ENCODE measurements at regions of chrX and their contacts with region 1.

Region 1: DNA sequence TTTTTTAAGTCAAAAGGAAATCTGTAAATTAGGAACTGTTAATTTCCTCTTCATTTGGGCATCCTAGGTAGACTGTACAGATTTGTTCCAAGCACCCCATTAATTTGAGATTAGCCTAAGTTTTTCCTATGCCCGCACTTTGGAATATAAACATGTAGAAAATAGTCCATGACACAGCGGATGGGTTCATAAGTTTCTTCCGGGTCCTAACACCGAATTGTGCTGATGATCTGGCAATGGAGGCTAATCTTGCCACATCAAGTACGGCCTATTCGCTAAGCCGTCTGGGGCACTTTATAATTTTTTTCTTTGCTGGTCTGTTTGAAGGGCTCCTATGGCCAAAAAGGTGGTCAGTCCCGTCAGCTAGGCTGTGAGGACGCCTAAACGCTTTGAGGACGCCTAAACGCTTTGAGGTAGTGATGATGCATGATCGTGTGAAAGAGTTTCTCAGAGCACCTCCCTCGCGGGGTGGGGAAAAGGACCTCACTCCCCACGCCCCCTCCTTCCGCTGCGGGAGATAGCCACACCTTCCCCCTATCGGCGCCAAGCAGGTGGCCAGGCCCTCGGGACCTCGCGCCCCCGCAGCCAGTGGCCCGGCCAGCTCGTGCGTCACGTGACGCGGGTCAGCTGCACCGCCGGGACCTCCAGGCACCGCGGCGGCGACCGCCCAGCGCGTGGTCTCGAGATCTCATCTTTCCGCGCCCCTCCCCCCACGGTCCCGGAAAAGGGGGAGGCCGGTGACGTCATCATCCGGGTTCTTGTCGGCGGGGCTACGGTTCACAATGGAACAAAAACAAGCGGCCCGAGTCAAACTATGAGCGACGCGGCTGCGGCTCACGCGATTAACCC is 977 bp upstream of the USP9X start:
- DNase-seq: peak; percentile 94
- ATAC-seq: peak; percentile 64
- H3K4me3 Mint-ChIP-seq: peak overlapping the region; percentile 90
- H3K27ac Mint-ChIP-seq: peak overlapping the region; percentile 99
- H3K4me1 Mint-ChIP-seq: peaks cover 36% of the 10 kb centered on the region
- H3K27me3 Mint-ChIP-seq: no peaks in the 10 kb centered on the region
- CTCF ChIP-seq: no peak

Region 2: DNA sequence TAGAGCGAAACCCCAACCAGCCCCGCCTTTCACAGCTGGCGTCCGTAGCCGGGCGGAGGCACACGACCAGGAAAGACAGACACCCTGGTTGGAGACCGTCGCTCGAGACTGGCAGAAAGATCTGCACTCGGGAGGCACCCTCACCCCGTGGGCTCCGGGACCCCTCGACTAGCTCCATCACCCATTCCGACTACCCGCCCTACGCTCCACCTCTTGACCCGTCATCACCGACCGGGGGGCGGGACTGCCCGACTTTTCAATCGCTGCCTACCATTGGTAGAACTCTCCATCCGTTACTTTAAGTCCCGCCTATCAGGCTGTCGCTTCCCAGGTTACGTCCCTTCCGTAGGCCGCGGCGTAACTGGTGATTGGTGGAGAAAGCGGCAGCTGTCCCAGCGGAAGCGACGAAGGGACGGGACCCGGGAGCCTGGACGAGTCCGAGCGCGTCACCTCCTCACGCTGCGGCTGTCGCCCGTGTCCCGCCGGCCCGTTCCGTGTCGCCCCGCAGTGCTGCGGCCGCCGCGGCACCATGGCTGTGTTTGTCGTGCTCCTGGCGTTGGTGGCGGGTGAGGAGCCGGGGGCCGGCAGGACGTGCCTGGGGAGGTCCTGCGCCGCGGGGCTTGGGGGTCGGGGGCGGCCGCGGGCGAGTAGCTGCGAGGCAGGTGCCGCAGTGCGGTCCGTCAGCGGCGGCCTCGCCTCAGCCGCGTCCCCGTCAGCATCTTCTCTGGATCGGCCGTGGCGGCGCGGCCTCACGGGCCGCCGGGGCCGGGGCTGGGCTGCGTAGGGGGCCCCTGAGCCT is 503.5 kb before region 1 on chrX and contains the start of gene ATP6AP2:
- CTCF ChIA-PET with region 1: no interaction called
- POLR2A ChIA-PET with region 1: no interaction called
- intact Hi-C with region 1: loop called (anchors 10 kb)
- DNase-seq: peak; percentile 71
- ATAC-seq: peak; percentile 95
- H3K4me3 Mint-ChIP-seq: peak within 1 kb of the TSS; percentile 92
- H3K27ac Mint-ChIP-seq: peak within 1 kb of the TSS; percentile 94
- H3K4me1 Mint-ChIP-seq: peaks cover 27% of the 10 kb centered on the region
- H3K27me3 Mint-ChIP-seq: no peaks in the 10 kb centered on the region
- CTCF ChIP-seq: no peak
- total RNA-seq, gene ATP6AP2: 48.6 and 53.8 TPM in 2 replicates

Region 3: DNA sequence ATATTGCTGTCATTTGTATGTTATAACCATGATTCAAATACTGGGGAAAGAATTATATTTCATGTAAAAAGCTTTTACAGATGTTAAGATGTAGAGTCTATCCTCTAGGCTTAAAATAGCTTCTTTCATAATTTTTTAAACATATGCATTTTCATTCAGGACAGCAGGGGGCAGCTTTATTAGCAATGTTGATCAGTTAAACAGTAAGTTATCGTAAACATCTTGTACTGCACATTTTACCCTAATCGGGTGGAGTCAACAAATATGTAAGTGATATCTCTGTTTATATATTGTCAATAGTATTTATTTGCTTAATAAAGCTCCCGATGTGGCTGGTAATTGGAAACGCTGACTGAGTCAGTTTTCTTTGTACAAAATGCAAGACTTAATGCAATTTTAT is 206.4 kb before region 1 on chrX:
- CTCF ChIA-PET with region 1: interaction called, 11 read pairs
- POLR2A ChIA-PET with region 1: interaction called, 11 read pairs
- intact Hi-C with region 1: loop called (anchors 10 kb)
- DNase-seq: no peak
- ATAC-seq: peak; percentile 40
- H3K4me3 Mint-ChIP-seq: no peak overlapping the region
- H3K27ac Mint-ChIP-seq: no peak overlapping the region
- H3K4me1 Mint-ChIP-seq: no peaks in the 10 kb centered on the region
- H3K27me3 Mint-ChIP-seq: peaks cover 6% of the 10 kb centered on the region
- CTCF ChIP-seq: no peak

Region 4: DNA sequence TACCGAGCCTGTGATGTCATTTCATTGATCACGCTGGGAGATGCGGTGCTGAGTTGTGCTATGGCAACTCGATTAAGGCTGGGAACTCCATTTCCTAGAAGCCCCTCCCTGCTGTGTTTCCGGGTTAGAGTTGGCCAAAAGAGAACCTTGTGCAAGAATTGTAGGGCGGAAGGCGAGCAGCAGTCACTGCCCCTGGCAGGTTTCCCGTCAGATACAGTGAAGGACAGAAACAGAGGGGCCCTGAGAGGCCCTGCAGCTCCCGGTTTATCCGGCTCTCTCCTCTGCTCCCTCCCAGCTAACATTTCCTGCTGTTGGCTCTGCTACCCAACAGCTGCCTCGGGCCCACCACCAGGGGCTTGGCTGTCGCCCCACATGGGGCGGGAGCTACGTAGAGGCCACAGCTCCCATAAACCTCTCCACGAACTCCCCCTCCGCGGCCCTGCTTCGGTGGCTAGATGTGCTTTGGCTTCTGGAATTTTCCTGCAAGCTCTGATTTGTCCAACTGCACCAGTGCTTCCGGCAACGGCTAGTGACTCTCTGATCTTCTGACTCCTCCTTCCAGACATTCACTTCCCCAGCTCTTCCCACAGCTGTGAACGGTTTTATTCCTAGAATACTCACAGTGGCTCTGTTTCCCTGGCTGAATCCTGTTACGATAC is 74.0 kb before region 1 on chrX:
- CTCF ChIA-PET with region 1: no interaction called
- POLR2A ChIA-PET with region 1: interaction called, 22 read pairs
- intact Hi-C with region 1: loop called (anchors 1 kb)
- DNase-seq: peak; percentile 16
- ATAC-seq: peak; percentile 84
- H3K4me3 Mint-ChIP-seq: peak overlapping the region; percentile 78
- H3K27ac Mint-ChIP-seq: peak overlapping the region; percentile 73
- H3K4me1 Mint-ChIP-seq: peaks cover 14% of the 10 kb centered on the region
- H3K27me3 Mint-ChIP-seq: peaks cover 5% of the 10 kb centered on the region
- CTCF ChIP-seq: no peak

Region 5: DNA sequence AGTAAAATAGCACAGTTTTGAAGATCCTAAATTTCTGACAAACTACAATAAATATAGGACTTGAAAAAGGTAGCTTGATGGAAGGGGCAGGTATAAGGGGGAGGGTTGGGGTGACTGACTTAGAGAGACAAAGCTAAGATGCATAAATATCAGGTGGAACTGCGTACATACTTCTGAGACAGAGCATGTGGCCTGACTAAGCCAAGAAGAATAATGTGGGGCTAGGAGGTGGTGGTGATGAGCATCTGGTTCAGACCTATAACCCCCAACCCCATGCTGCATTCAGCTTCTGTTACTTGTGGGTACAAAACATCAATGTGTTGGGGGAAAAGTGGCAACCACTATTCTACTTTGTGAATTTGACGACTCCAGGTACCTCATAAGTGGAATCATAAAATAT is 20.7 kb after region 1 on chrX:
- CTCF ChIA-PET with region 1: interaction called, 3 read pairs
- POLR2A ChIA-PET with region 1: interaction called, 10 read pairs
- intact Hi-C with region 1: loop called (anchors 2 kb)
- DNase-seq: no peak
- ATAC-seq: no peak
- H3K4me3 Mint-ChIP-seq: no peak overlapping the region
- H3K27ac Mint-ChIP-seq: no peak overlapping the region
- H3K4me1 Mint-ChIP-seq: peaks cover 53% of the 10 kb centered on the region
- H3K27me3 Mint-ChIP-seq: no peaks in the 10 kb centered on the region
- CTCF ChIP-seq: no peak

Measured in activated B cell treated with CpG ODN at 0.5 μM for 24 hours (primary cell).